Cardiac septum (tissue), 1 donor: ENCODE measurements at regions of chr4 and their contacts with region 1.

Region 1: DNA sequence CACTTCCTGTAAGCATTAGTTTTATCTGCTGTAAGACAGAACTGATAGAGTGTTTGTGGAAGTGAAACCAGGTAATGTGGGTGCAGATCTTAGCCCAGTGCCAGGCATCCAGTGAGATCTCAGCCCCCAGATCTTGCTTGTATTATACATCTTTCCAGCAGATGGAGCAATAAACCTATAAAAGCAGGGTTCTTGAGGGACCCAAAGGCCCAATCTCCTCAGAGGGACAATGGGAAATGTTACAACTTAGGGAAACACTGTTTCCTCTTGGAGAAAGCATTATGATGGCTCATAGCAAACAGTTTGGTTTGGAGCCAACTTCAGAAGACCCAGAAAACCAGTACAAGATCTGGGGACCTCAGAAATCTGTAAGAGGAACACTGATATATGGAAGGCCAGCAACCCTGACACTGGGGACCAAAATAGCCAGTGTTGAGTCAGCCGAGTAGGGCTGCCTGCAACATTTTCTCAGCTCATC is 206.3 kb downstream of the SLC7A11 start:
- DNase-seq: no peak

Region 2: DNA sequence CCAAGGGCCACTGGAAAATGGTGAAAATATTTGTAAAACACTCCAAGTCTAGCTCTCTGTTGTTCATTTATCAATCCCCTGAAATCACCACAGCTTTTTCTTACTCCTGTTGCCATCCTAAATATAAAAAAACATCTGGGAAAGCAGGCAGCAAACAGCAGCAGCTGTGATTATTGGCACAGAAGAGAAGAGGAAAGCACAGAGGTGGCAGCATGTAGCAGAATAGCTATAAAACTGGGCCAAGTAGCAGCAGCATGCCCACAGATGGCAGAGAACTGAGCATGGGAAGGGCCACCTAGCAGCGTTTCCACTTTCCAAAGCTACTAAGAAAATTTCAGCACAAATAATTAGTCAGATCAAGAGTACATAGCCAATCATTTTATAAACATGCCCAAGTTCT is 100.9 kb before region 1 on chr4:
- intact Hi-C with region 1: no loop called
- DNase-seq: no peak

Region 3: GRCh38 chr4:138090150-138090917 is 54.5 kb after region 1 on chr4:
- intact Hi-C with region 1: loop called (anchors 5 kb)
- DNase-seq: no peak

Region 4: GRCh38 chr4:138182838-138183426 is 147.1 kb after region 1 on chr4:
- intact Hi-C with region 1: loop called (anchors 5 kb)
- DNase-seq: no peak

Region 5: GRCh38 chr4:138680989-138681604 is 645.3 kb after region 1 on chr4:
- intact Hi-C with region 1: loop called (anchors 2 kb)
- DNase-seq: peak; percentile 81

Region 6: DNA sequence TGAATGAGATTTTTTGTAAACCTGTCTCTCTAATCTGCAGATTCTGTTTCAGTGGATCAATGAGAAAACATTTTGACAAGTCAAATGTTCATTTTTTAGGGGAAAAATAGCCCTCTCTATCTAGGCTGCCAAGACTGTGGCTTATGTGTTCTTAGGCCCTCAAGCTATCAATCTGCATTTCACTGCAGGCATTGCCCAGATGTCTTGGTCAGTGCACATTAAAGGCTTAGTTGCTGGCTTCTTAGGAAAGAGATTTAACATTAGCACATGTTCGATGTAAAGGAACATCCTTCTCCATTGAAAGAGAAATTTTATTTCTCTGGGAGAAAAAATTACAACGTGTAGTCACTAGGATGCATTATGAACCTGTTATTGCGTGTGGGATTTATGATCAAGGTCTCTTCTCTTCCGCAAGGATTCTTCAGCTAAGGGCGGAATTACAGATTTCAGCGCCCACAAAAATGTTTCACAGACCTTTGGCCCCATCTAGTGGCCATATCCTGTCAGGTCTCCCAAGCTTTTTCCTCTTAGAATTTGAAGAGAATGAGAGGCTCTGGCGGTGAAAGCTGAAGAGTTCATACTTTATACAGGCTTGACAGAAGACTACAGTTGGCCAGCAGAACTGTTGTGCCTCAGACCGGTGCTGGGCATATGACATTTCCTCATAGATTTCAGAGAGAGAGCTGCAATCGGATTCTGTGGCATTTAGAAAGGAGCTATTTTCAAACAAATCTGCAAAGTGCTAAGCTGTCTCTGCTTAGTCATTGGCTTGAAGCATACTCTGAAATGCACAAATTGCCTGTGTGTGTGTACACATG is 835.1 kb after region 1 on chr4:
- intact Hi-C with region 1: loop called (anchors 5 kb)
- DNase-seq: no peak